ENCODE measurements at regions of chr13 and their contacts with region 1.

Region 1: GRCh38 chr13:49976314-49977258 is 20.3 kb upstream of the TRIM13 start:
- DNase-seq: peak; percentile 39 to 92 (median 71)
- ATAC-seq: peak; percentile 75 to 84 (median 81)
- H3K4me3 ChIP-seq: no peak overlapping the region
- H3K4me3 Mint-ChIP-seq: no peak overlapping the region
- H3K27ac ChIP-seq: no peak overlapping the region
- H3K27ac Mint-ChIP-seq: no peak overlapping the region
- H3K4me1 ChIP-seq: peaks cover 0 to 2% of the 10 kb centered on the region in 2 experiments
- H3K4me1 Mint-ChIP-seq: peaks cover 0 to 2% (median 2%) of the 10 kb centered on the region in 3 donors
- H3K27me3 ChIP-seq: no peaks in the 10 kb centered on the region
- H3K27me3 Mint-ChIP-seq: no peaks in the 10 kb centered on the region

Region 2: DNA sequence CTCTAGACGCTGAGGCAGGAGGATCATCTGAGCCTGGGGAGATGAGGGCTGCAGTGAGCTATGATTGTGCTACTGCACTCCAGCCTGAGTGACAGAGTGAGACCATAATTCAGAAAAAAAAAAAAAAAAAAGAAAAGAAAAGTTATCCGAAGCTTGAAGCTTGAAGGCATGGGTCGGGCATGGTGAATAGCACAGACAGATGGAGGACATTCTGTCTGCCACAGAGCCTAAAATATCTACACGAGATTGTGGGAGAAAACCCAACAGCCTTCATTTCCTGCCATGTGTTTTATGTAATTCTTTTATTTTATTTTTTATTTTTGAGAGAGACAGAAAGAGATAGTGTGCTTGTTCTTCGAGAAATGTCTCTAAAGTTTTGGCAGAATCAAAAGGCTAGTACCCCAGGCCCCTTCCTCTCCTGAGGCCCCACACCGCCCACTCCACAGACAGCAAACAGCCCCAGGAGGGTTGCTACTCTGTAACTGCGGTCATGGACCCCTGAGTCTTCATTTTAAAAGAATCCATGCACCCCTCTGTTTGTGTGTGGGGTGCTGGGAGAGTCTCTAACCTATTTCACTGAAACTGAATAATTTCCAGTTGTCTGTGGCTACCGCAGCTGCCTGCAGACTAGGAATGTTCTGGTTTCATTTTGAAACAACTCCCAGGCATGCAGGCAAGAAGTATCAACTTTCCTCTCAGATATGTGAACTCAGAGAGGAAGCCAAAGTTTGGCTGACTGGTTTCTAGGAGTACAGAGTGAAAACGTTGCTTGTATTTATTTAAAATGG is 1405.3 kb before region 1 on chr13:
- CTCF ChIA-PET with region 1: no interaction called
- POLR2A ChIA-PET with region 1: interaction called in 1 of 2 experiments, 10 read pairs
- DNase-seq: no peak
- ATAC-seq: peak in 2 of 4 experiments; percentile 36 to 44
- H3K4me3 ChIP-seq: no peak overlapping the region
- H3K4me3 Mint-ChIP-seq: no peak overlapping the region
- H3K27ac ChIP-seq: peak overlapping the region; percentile 28
- H3K27ac Mint-ChIP-seq: peak overlapping the region in 1 of 2 donors; percentile 55
- H3K4me1 ChIP-seq: peaks cover 4 to 19% of the 10 kb centered on the region in 2 experiments
- H3K4me1 Mint-ChIP-seq: peaks cover 26 to 43% (median 40%) of the 10 kb centered on the region in 3 donors
- H3K27me3 ChIP-seq: peaks cover 2 to 3% of the 10 kb centered on the region in 2 experiments
- H3K27me3 Mint-ChIP-seq: peaks cover 8 to 14% of the 10 kb centered on the region in 2 donors

Region 3: DNA sequence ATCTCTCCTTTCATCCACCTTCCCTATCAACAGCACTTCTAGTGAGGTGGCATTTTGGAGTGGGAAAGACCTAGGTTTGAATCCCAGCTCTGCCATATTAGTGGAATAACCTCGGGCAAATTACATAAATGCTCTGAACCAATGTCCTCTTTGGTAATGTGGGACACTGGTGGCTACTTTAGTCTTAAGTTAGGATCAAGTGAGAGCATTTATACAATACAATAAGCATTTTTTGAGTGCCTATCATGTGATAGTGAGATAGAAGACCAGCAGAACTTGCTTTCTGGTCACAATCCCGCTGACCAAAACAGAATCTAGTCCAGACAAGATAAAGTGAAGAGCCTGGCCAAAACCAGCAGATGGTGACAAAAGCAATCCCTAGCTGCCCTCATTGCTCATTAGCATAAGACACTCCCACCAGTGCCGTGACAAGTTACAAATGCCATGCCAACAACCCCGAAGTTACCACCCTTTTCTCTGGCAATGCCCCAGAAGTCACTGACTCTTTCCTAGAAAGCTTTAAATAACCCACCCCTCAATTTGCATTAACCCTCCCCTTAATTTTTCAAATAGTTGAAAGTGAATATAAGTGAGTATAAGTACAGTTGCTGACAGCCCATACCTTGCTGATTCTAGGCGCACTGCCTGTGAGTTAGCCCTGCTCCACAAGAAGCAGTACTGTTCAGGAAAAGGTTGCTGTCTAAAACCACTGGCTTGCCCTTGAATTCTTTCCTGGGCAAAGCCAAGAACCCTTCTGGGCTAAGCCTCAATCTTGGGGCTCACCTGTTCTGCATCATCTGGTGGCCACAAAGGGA is 155.2 kb before region 1 on chr13:
- CTCF ChIA-PET with region 1: no interaction called
- POLR2A ChIA-PET with region 1: no interaction called
- DNase-seq: peak in 1 of 35 experiments; percentile 1
- ATAC-seq: no peak
- H3K4me3 ChIP-seq: no peak overlapping the region
- H3K4me3 Mint-ChIP-seq: no peak overlapping the region
- H3K27ac ChIP-seq: no peak overlapping the region
- H3K27ac Mint-ChIP-seq: no peak overlapping the region
- H3K4me1 ChIP-seq: no peaks in the 10 kb centered on the region
- H3K4me1 Mint-ChIP-seq: no peaks in the 10 kb centered on the region
- H3K27me3 ChIP-seq: peaks cover 0 to 14% of the 10 kb centered on the region in 2 experiments
- H3K27me3 Mint-ChIP-seq: peaks cover 12 to 24% of the 10 kb centered on the region in 2 donors

Region 4: GRCh38 chr13:49996951-49997895 is 20.6 kb after region 1 on chr13 and contains the start of gene TRIM13:
- CTCF ChIA-PET with region 1: interaction called, 4 to 16 read pairs
- POLR2A ChIA-PET with region 1: no interaction called
- DNase-seq: peak; percentile 66 to 89 (median 79)
- ATAC-seq: peak; percentile 83 to 85 (median 84)
- H3K4me3 ChIP-seq: peak within 1 kb of the TSS; percentile 81 to 98
- H3K4me3 Mint-ChIP-seq: peak within 1 kb of the TSS; percentile 85 to 86 (median 85)
- H3K27ac ChIP-seq: peak within 1 kb of the TSS; percentile 83
- H3K27ac Mint-ChIP-seq: peak within 1 kb of the TSS; percentile 85 to 87
- H3K4me1 ChIP-seq: peaks cover 26 to 34% of the 10 kb centered on the region in 2 experiments
- H3K4me1 Mint-ChIP-seq: peaks cover 39 to 54% (median 53%) of the 10 kb centered on the region in 3 donors
- H3K27me3 ChIP-seq: no peaks in the 10 kb centered on the region
- H3K27me3 Mint-ChIP-seq: no peaks in the 10 kb centered on the region
- total RNA-seq, gene TRIM13: 20.5 to 27.8 (median 23.4) TPM

Region 5: GRCh38 chr13:50529154-50529882 is 552.7 kb after region 1 on chr13:
- CTCF ChIA-PET with region 1: interaction called, 3 to 10 read pairs
- POLR2A ChIA-PET with region 1: no interaction called
- DNase-seq: no peak
- ATAC-seq: peak; percentile 31 to 69 (median 50)
- H3K4me3 ChIP-seq: no peak overlapping the region
- H3K4me3 Mint-ChIP-seq: peak overlapping the region in 1 of 3 donors; percentile 4
- H3K27ac ChIP-seq: no peak overlapping the region
- H3K27ac Mint-ChIP-seq: peak overlapping the region; percentile 11 to 64
- H3K4me1 ChIP-seq: peaks cover 9 to 10% of the 10 kb centered on the region in 2 experiments
- H3K4me1 Mint-ChIP-seq: peaks cover 28 to 37% (median 28%) of the 10 kb centered on the region in 3 donors
- H3K27me3 ChIP-seq: no peaks in the 10 kb centered on the region
- H3K27me3 Mint-ChIP-seq: no peaks in the 10 kb centered on the region

Region 6: GRCh38 chr13:50801087-50801931 is 824.7 kb after region 1 on chr13:
- CTCF ChIA-PET with region 1: interaction called, 6 to 18 read pairs
- POLR2A ChIA-PET with region 1: no interaction called
- DNase-seq: peak; percentile 14 to 84 (median 48)
- ATAC-seq: peak; percentile 90 to 95 (median 94)
- H3K4me3 ChIP-seq: no peak overlapping the region
- H3K4me3 Mint-ChIP-seq: no peak overlapping the region
- H3K27ac ChIP-seq: no peak overlapping the region
- H3K27ac Mint-ChIP-seq: peak overlapping the region in 1 of 2 donors; percentile 4
- H3K4me1 ChIP-seq: peaks cover 6 to 10% of the 10 kb centered on the region in 2 experiments
- H3K4me1 Mint-ChIP-seq: peaks cover 6 to 13% (median 7%) of the 10 kb centered on the region in 3 donors
- H3K27me3 ChIP-seq: no peaks in the 10 kb centered on the region
- H3K27me3 Mint-ChIP-seq: no peaks in the 10 kb centered on the region